ENCODE measurements at regions of chr3 and their contacts with region 1.

Region 1: GRCh38 chr3:16842272-16843270 is 42.2 kb upstream of the PLCL2 start:
- DNase-seq: peak; percentile 81
- ATAC-seq: peak; percentile 85
- H3K4me3 Mint-ChIP-seq: peak overlapping the region; percentile 77
- H3K27ac Mint-ChIP-seq: peak overlapping the region; percentile 99
- H3K4me1 Mint-ChIP-seq: peaks cover 71% of the 10 kb centered on the region
- H3K27me3 Mint-ChIP-seq: no peaks in the 10 kb centered on the region

Region 2: DNA sequence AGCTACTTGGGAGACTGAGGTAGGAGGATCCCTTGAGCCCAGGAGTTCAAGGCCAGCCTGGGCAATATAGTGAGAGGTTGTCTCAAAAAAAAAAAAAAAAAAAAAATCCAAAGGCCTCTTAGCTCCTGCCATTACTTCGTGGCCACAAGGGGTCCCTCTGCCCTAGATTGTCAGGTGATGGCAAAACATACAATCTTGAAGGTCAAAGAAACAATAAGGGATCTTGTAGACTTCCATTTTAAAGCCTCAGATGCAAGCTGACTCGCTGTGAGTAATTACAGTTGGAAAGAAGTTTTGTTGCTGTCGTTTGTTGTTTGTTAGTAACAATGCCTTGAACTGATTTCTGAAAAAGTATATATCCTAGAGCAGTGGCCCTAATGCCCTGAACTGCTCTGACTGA is 13.8 kb before region 1 on chr3:
- CTCF ChIA-PET with region 1: interaction called, 15 read pairs
- POLR2A ChIA-PET with region 1: interaction called, 6 read pairs
- DNase-seq: peak; percentile 64
- ATAC-seq: peak; percentile 50
- H3K4me3 Mint-ChIP-seq: no peak overlapping the region
- H3K27ac Mint-ChIP-seq: no peak overlapping the region
- H3K4me1 Mint-ChIP-seq: peaks cover 12% of the 10 kb centered on the region
- H3K27me3 Mint-ChIP-seq: no peaks in the 10 kb centered on the region

Measured in activated CD8-positive, alpha-beta T cell treated with anti-CD3 and anti-CD28 coated beads, Interleukin-2, amount 10 ng/mL, durations not matched to agents 7 days and 5 days (primary cell).